MCF 10A (cell line): ENCODE measurements at regions of chr11 and their contacts with region 1.

Region 1: GRCh38 chr11:121249039-121249663 is 43.4 kb upstream of the SC5D start:
- DNase-seq: peak; percentile 56
- H3K4me3 Mint-ChIP-seq: no peak overlapping the region
- H3K27ac Mint-ChIP-seq: no peak overlapping the region
- H3K4me1 Mint-ChIP-seq: no peaks in the 10 kb centered on the region
- H3K27me3 Mint-ChIP-seq: no peaks in the 10 kb centered on the region
- CTCF ChIP-seq: peak; percentile 59

Region 2: GRCh38 chr11:121292495-121293287 is 43.5 kb after region 1 on chr11 and contains the start of gene SC5D:
- CTCF ChIA-PET with region 1: interaction called, 3 read pairs
- POLR2A ChIA-PET with region 1: interaction called, 5 read pairs
- intact Hi-C with region 1: loop called (anchors 1 kb)
- DNase-seq: peak; percentile 92
- H3K4me3 Mint-ChIP-seq: peak within 1 kb of the TSS; percentile 94
- H3K27ac Mint-ChIP-seq: peak within 1 kb of the TSS; percentile 93
- H3K4me1 Mint-ChIP-seq: peaks cover 27% of the 10 kb centered on the region
- H3K27me3 Mint-ChIP-seq: no peaks in the 10 kb centered on the region
- CTCF ChIP-seq: no peak
- total RNA-seq, gene SC5D: 25.9 and 27.6 TPM in 2 replicates

Region 3: DNA sequence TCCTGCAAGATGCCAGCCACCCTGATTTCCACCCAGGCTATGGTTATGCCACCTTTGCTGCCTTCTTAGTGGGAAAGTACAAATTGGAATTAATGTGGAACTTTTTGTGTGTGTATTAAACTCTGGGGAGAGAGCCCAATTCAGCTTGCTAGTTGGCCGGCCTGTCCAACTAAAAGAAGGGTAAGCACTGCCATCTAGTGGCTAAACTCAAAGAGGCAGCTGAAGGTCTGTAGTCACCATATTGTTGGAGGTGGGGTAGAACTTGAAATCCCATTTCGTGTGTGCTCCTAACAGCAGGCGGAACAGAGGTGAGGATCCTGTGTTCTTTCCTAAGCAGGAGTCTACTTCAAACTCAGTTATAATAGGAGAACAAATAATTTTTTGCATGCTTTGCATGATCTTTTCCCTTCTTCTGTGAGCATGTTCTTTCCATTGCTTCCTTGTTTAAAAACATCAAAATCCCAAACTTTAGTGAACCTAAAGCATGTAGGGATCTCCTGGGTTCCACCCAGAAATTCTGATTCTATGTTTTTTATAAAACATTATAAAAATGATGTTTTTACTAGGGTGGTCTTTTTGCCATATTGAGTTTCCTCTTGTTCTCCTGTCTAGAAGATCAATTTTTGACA is 342.4 kb after region 1 on chr11:
- CTCF ChIA-PET with region 1: interaction called, 4 read pairs
- POLR2A ChIA-PET with region 1: interaction called, 4 read pairs
- intact Hi-C with region 1: loop called (anchors 1 kb)
- DNase-seq: peak; percentile 80
- H3K4me3 Mint-ChIP-seq: no peak overlapping the region
- H3K27ac Mint-ChIP-seq: no peak overlapping the region
- H3K4me1 Mint-ChIP-seq: peaks cover 24% of the 10 kb centered on the region
- H3K27me3 Mint-ChIP-seq: no peaks in the 10 kb centered on the region
- CTCF ChIP-seq: peak; percentile 86

Region 4: DNA sequence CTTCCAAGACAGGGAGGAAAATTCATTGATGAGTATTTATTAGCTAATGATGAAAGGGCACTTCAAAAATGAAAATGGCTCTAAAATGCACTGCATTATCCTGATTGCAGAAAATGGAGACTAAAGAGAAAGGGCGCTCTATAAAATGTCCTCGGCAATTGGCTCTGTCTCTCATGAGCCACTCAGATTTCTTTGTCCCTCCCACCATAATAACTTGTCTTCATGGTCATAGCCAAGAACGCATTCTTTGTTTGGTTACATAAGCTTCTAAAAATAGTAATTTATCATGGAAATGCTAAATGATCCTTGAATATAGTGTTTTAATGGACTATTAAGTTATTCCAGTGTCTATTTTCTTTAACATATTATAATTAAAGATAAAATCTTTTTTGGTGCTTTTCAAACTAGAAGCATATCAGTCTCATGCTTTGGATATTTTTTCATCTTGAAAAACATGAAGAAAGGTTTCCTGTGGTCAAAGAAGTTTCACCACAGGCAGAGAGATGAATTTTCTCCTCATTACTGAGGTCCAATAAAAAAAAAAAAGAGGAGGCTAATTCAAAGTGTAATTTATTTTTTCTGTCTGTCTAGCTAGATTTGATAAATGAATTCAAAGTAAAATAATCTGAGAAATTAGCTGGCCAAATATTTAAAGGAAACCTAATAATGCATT is 1105.0 kb after region 1 on chr11:
- CTCF ChIA-PET with region 1: no interaction called
- POLR2A ChIA-PET with region 1: no interaction called
- intact Hi-C with region 1: no loop called
- DNase-seq: no peak
- H3K4me3 Mint-ChIP-seq: no peak overlapping the region
- H3K27ac Mint-ChIP-seq: no peak overlapping the region
- H3K4me1 Mint-ChIP-seq: peaks cover 9% of the 10 kb centered on the region
- H3K27me3 Mint-ChIP-seq: no peaks in the 10 kb centered on the region
- CTCF ChIP-seq: no peak